Naive thymus-derived CD4-positive, alpha-beta T cell (primary cell): ENCODE measurements at regions of chr18 and their contacts with region 1.

Region 1: DNA sequence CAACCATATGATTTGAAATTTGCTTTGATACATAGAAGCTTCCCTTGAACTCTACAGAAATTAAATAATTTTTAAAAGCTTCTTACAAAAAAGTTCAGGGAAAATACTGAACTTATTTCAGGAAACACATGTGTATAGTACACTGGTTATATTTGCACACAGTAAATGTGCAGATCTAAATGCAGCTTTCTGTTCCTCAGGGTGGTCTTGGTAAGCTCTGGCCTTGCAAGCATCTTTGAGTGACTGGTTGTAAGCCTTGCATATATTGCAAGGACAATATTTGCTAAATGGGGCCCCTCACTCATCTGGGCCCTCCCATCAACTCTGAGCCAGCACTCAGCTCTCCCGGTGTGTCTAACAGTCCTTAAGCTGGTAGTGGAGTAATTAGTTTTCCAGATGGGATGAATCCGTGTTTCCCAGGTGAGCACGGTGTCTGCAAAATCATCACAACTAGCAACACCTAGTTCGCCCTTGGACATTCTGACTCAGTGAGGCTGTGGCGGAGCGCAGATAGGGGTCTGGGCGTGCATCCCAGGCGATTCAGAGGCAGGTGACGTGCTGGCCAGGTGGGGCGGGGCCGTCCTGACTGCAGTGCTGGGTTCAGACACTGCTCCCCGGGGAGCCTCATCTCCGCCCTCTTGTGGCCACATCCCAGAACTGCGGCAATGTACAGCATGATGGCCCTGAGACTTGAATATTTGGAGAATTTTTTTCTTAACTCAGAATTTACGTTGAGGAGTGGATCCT is 149.6 kb downstream of the MBP start:
- DNase-seq: peak; percentile 62 to 87 (median 81)
- ATAC-seq: peak; percentile 98
- H3K4me3 ChIP-seq: no peak overlapping the region
- H3K4me3 Mint-ChIP-seq: peak overlapping the region in 3 of 10 donors; percentile 27 to 53 (median 40)
- H3K27ac ChIP-seq: no peak overlapping the region
- H3K27ac Mint-ChIP-seq: peak overlapping the region in 2 of 9 donors; percentile 4 to 51
- H3K4me1 ChIP-seq: peaks cover 0 to 7% of the 10 kb centered on the region in 2 donors
- H3K4me1 Mint-ChIP-seq: peaks cover 0 to 8% (median 6%) of the 10 kb centered on the region in 7 donors
- H3K27me3 ChIP-seq: no peaks in the 10 kb centered on the region
- H3K27me3 Mint-ChIP-seq: no peaks in the 10 kb centered on the region

Region 2: DNA sequence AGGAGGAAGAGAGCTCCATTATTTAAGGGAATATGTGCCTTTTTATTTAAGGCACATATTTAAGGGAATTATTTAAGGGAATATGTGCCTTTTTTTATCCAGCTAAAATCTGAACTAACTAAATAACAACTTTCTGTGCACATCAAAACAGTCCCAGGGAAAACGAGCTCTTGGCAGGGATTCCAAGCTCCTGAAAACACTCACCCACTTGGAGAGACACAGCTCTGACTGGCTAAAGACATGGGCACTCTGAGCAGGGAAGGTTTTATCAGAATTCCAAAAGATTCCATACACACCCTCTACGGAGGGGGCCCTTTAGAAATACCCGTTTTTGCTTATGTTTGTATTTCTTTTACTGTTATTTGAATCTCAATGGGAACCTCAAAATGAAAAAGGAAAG is 669.0 kb before region 1 on chr18:
- CTCF ChIA-PET with region 1: no interaction called
- POLR2A ChIA-PET with region 1: no interaction called
- intact Hi-C with region 1: no loop called
- DNase-seq: no peak
- ATAC-seq: no peak
- H3K4me3 ChIP-seq: no peak overlapping the region
- H3K4me3 Mint-ChIP-seq: no peak overlapping the region
- H3K27ac ChIP-seq: no peak overlapping the region
- H3K27ac Mint-ChIP-seq: no peak overlapping the region
- H3K4me1 ChIP-seq: no peaks in the 10 kb centered on the region
- H3K4me1 Mint-ChIP-seq: no peaks in the 10 kb centered on the region
- H3K27me3 ChIP-seq: no peaks in the 10 kb centered on the region
- H3K27me3 Mint-ChIP-seq: peaks cover 0 to 8% (median 0%) of the 10 kb centered on the region in 5 donors

Region 3: GRCh38 chr18:76398896-76399612 is 584.0 kb before region 1 on chr18:
- CTCF ChIA-PET with region 1: no interaction called
- POLR2A ChIA-PET with region 1: no interaction called
- intact Hi-C with region 1: loop called in 1 of 2 experiments (anchors 1 kb)
- DNase-seq: peak; percentile 47 to 78 (median 71)
- ATAC-seq: peak; percentile 93
- H3K4me3 ChIP-seq: no peak overlapping the region
- H3K4me3 Mint-ChIP-seq: peak overlapping the region in 1 of 10 donors; percentile 12
- H3K27ac ChIP-seq: no peak overlapping the region
- H3K27ac Mint-ChIP-seq: peak overlapping the region in 2 of 9 donors; percentile 41 to 73
- H3K4me1 ChIP-seq: no peaks in the 10 kb centered on the region
- H3K4me1 Mint-ChIP-seq: peaks cover 5 to 38% (median 27%) of the 10 kb centered on the region in 7 donors
- H3K27me3 ChIP-seq: no peaks in the 10 kb centered on the region
- H3K27me3 Mint-ChIP-seq: peaks cover 0 to 17% (median 0%) of the 10 kb centered on the region in 5 donors

Region 4: DNA sequence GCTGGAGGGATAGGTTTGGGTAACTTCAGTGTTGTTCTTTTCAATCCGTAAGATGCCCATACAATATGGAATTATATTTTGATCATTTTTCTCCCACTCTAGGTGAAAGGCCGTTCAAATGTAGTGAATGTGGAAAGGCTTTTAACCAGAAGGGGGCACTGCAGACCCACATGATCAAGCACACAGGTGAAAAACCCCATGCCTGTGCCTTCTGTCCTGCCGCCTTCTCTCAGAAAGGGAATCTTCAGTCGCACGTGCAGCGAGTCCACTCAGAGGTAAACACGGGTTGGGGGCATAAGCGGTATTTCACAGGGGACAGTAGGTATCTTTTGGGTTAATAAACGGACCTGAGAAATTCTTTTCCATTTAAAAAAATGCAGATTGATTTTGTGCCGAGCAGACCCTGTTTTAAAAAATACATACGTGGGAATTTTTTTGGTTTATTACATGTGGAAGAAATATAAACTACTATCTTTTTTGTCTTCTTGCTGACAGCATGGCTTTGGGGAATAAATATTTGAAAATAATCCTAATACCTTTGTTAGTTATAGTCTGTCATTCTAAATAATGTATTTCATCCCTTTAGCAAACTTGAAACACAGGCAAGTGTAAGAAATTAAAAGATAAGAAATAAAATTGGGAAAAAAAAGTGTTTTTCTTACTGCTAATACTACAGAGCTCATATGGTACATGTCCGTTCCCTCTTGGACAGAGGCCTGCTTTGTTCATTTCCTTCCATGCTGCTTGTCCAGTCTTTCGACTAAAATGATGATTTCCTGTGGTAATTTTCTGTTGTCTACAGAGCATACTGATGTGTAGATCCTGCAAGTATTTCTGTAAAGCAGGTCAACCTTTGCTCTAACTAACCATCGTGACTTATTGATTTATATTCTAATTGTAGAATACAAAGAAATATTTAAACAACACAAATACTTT is 107.4 kb before region 1 on chr18:
- CTCF ChIA-PET with region 1: no interaction called
- POLR2A ChIA-PET with region 1: no interaction called
- intact Hi-C with region 1: loop called in 1 of 2 experiments (anchors 1 kb)
- DNase-seq: peak in 5 of 9 donors; percentile 20 to 35 (median 28)
- ATAC-seq: peak; percentile 65
- H3K4me3 ChIP-seq: no peak overlapping the region
- H3K4me3 Mint-ChIP-seq: no peak overlapping the region
- H3K27ac ChIP-seq: no peak overlapping the region
- H3K27ac Mint-ChIP-seq: peak overlapping the region in 1 of 9 donors; percentile 5
- H3K4me1 ChIP-seq: no peaks in the 10 kb centered on the region
- H3K4me1 Mint-ChIP-seq: peaks cover 0 to 14% (median 5%) of the 10 kb centered on the region in 7 donors
- H3K27me3 ChIP-seq: no peaks in the 10 kb centered on the region
- H3K27me3 Mint-ChIP-seq: no peaks in the 10 kb centered on the region

Region 5: GRCh38 chr18:76922107-76922506 is 60.9 kb before region 1 on chr18:
- CTCF ChIA-PET with region 1: interaction called, 6 read pairs
- POLR2A ChIA-PET with region 1: no interaction called
- intact Hi-C with region 1: loop called (anchors 1 kb)
- DNase-seq: peak in 8 of 9 donors; percentile 40 to 72 (median 62)
- ATAC-seq: peak; percentile 98
- H3K4me3 ChIP-seq: no peak overlapping the region
- H3K4me3 Mint-ChIP-seq: peak overlapping the region in 1 of 10 donors; percentile 50
- H3K27ac ChIP-seq: no peak overlapping the region
- H3K27ac Mint-ChIP-seq: peak overlapping the region in 7 of 9 donors; percentile 1 to 78 (median 49)
- H3K4me1 ChIP-seq: no peaks in the 10 kb centered on the region
- H3K4me1 Mint-ChIP-seq: peaks cover 14 to 21% (median 18%) of the 10 kb centered on the region in 7 donors
- H3K27me3 ChIP-seq: no peaks in the 10 kb centered on the region
- H3K27me3 Mint-ChIP-seq: no peaks in the 10 kb centered on the region

Region 6: DNA sequence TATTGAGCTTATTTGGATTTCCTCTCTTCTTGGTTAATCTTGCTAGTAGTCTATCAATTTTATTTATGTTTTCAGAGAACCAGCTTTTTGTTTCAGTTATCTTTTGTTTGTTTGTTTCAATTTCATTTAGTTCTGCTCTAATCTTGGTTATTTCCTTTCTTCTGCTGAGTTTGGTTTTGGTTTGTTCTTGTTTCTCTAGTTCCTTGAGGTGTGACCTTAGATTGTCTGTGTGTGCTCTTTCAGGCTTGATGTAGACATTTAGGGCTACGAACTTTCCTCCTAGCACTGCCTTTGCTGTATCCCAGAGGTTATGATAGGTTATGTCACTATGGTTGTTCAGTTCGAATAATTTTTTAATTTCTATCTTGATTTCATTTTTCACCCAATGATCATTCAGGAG is 19.1 kb before region 1 on chr18:
- CTCF ChIA-PET with region 1: interaction called, 6 read pairs
- POLR2A ChIA-PET with region 1: no interaction called
- intact Hi-C with region 1: loop called in 1 of 2 experiments (anchors 2 kb)
- DNase-seq: no peak
- ATAC-seq: no peak
- H3K4me3 ChIP-seq: no peak overlapping the region
- H3K4me3 Mint-ChIP-seq: peak overlapping the region in 1 of 10 donors; percentile 44
- H3K27ac ChIP-seq: no peak overlapping the region
- H3K27ac Mint-ChIP-seq: peak overlapping the region in 5 of 9 donors; percentile 1 to 43 (median 11)
- H3K4me1 ChIP-seq: no peaks in the 10 kb centered on the region
- H3K4me1 Mint-ChIP-seq: peaks cover 18 to 35% (median 29%) of the 10 kb centered on the region in 7 donors
- H3K27me3 ChIP-seq: no peaks in the 10 kb centered on the region
- H3K27me3 Mint-ChIP-seq: no peaks in the 10 kb centered on the region

Region 7: DNA sequence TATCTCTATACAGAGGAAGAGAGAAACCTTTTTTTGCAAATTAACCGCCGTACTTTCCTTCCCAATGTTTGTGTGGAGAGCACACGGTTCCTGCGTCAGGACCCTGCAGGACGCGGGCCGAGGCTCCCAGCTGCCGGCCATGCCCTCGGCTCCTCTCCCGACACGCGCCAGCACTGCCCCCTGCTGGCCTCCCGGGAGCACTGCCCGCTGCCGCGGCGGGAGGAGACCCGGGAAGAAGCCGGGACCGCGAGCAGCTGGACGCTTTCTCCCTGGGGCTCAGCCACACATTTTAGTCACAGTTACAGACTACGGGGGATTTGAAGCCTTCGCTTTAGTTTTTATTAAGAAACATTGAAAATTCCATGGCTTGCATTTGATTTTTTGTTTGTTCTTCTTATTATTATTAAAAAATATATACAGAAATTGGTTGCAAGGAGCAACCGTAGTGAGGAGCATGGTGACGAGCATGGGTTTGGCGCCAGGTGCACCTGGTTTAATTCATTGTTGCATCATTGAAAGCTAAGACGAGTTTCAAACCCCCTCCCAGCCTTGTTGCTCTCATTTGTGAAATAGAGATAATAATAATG is 667.9 kb after region 1 on chr18:
- CTCF ChIA-PET with region 1: no interaction called
- POLR2A ChIA-PET with region 1: no interaction called
- intact Hi-C with region 1: loop called in 1 of 2 experiments (anchors 5 kb)
- DNase-seq: peak in 6 of 9 donors; percentile 3 to 79 (median 16)
- ATAC-seq: peak; percentile 67
- H3K4me3 ChIP-seq: no peak overlapping the region
- H3K4me3 Mint-ChIP-seq: no peak overlapping the region
- H3K27ac ChIP-seq: no peak overlapping the region
- H3K27ac Mint-ChIP-seq: no peak overlapping the region
- H3K4me1 ChIP-seq: no peaks in the 10 kb centered on the region
- H3K4me1 Mint-ChIP-seq: peaks cover 0 to 5% (median 0%) of the 10 kb centered on the region in 7 donors
- H3K27me3 ChIP-seq: no peaks in the 10 kb centered on the region
- H3K27me3 Mint-ChIP-seq: peaks cover 2 to 33% (median 21%) of the 10 kb centered on the region in 5 donors